CD8-positive, alpha-beta T cell (primary cell): ENCODE measurements at regions of chr17 and their contacts with region 1.

Region 1: GRCh38 chr17:44503147-44504029 is at the start of gene GPATCH8:
- DNase-seq: peak; percentile 84 to 97 (median 92)
- ATAC-seq: peak; percentile 87
- H3K4me3 ChIP-seq: peak within 1 kb of the TSS; percentile 76 to 84
- H3K4me3 Mint-ChIP-seq: peak within 1 kb of the TSS; percentile 90
- H3K27ac ChIP-seq: peak within 1 kb of the TSS; percentile 85 to 86
- H3K27ac Mint-ChIP-seq: peak within 1 kb of the TSS; percentile 97
- H3K4me1 ChIP-seq: peaks cover 38% of the 10 kb centered on the region
- H3K4me1 Mint-ChIP-seq: peaks cover 45% of the 10 kb centered on the region
- H3K27me3 ChIP-seq: no peaks in the 10 kb centered on the region
- H3K27me3 Mint-ChIP-seq: peaks cover 8% of the 10 kb centered on the region
- CTCF ChIP-seq: no peak
- total RNA-seq, gene GPATCH8: 73.8 to 75.2 TPM

Region 2: DNA sequence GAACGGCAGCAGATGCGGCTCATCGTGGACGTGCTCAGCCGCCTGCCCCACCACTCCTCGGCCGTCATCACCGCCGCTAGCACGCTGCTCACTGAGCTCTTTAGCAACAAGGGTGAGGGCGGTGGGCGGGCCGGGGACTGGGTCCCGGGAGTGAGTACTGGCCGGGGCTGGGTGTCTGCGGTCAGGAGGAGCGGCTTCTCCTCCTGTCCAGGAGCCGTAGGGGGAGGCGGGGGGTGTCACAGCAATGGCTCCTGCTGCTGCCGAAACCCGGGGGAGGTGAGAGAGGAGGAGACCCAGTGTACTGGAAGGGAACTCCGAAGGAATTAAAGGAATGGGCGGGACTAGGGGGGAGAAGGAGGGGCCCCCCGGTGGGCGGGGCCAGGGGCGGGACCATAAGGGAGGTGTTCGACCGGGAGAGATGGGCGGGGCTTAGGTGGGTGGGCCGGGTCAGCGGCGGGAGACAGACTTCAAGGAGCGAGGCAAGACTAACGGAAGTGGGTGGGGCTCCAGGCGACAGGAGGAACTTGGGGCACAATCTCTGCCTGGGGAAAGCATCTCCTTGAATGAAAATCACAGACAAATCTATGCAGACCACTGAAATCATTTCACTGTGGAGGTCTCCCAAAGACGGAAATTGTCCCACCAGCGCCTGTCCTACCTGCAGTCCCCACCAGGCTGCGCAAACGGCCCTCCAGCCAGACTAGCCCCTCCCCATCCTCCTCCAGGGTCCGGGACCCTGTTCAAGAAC is 496.6 kb before region 1 on chr17:
- CTCF ChIA-PET with region 1: no interaction called
- POLR2A ChIA-PET with region 1: no interaction called
- intact Hi-C with region 1: loop called in 1 of 2 experiments (anchors 2 kb)
- DNase-seq: peak; percentile 91 to 99 (median 97)
- ATAC-seq: peak; percentile 88
- H3K4me3 ChIP-seq: peak overlapping the region; percentile 50 to 60
- H3K4me3 Mint-ChIP-seq: peak overlapping the region; percentile 88
- H3K27ac ChIP-seq: peak overlapping the region in 1 of 2 experiments; percentile 22
- H3K27ac Mint-ChIP-seq: no peak overlapping the region
- H3K4me1 ChIP-seq: peaks cover 30% of the 10 kb centered on the region
- H3K4me1 Mint-ChIP-seq: peaks cover 21% of the 10 kb centered on the region
- H3K27me3 ChIP-seq: peaks cover 0 to 17% of the 10 kb centered on the region in 2 experiments
- H3K27me3 Mint-ChIP-seq: peaks cover 5% of the 10 kb centered on the region
- CTCF ChIP-seq: no peak

Region 3: DNA sequence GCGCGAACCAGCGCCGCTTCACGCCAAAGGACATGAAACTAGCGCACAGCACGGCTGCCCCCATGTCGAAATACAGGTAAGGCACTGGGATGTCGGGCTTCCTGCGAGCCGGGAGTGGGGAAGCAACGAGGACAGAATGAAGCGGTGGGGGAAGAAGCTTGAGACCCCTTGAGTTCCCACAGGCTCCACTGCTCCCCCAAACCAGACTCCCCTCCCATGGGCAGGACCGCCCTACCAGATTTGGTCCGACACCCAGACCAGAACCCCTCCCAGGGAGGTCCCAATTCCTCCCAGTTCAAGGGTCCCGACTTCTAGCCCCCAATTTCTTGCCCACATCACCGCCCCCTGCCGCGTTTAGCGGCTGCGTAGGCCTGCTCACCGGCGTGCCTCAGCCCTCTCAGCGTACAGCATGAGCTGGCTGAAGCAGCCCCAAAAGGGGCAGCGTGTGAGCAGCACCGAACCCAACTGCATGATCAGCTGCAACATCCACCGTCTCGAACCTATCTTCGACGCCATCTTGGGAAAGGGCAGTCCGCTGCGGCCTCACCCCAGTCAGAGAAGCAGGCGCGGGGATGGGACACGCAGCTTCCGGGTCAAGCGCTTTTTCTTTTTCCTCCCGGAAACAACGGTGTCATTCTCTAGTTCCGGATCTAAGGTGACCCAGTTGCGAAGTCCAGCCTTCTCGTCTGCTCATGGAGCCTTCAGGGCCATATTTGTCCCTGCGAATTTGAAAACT is 488.8 kb before region 1 on chr17 and contains the start of gene TMEM101:
- CTCF ChIA-PET with region 1: no interaction called
- POLR2A ChIA-PET with region 1: no interaction called
- intact Hi-C with region 1: loop called in 1 of 2 experiments (anchors 2 kb)
- DNase-seq: peak; percentile 79 to 95 (median 90)
- ATAC-seq: peak; percentile 99
- H3K4me3 ChIP-seq: peak within 1 kb of the TSS; percentile 81 to 91
- H3K4me3 Mint-ChIP-seq: peak within 1 kb of the TSS; percentile 100
- H3K27ac ChIP-seq: peak within 1 kb of the TSS; percentile 51 to 55
- H3K27ac Mint-ChIP-seq: peak within 1 kb of the TSS; percentile 95
- H3K4me1 ChIP-seq: peaks cover 11% of the 10 kb centered on the region
- H3K4me1 Mint-ChIP-seq: peaks cover 10% of the 10 kb centered on the region
- H3K27me3 ChIP-seq: no peaks in the 10 kb centered on the region
- H3K27me3 Mint-ChIP-seq: no peaks in the 10 kb centered on the region
- CTCF ChIP-seq: no peak
- total RNA-seq, gene TMEM101: 8.1 to 8.7 TPM

Region 4: GRCh38 chr17:44293509-44294226 is 209.7 kb before region 1 on chr17:
- CTCF ChIA-PET with region 1: no interaction called
- POLR2A ChIA-PET with region 1: no interaction called
- intact Hi-C with region 1: no loop called
- DNase-seq: no peak
- ATAC-seq: no peak
- H3K4me3 ChIP-seq: no peak overlapping the region
- H3K4me3 Mint-ChIP-seq: no peak overlapping the region
- H3K27ac ChIP-seq: no peak overlapping the region
- H3K27ac Mint-ChIP-seq: no peak overlapping the region
- H3K4me1 ChIP-seq: no peaks in the 10 kb centered on the region
- H3K4me1 Mint-ChIP-seq: no peaks in the 10 kb centered on the region
- H3K27me3 ChIP-seq: no peaks in the 10 kb centered on the region
- H3K27me3 Mint-ChIP-seq: peaks cover 2% of the 10 kb centered on the region
- CTCF ChIP-seq: no peak

Region 5: GRCh38 chr17:44363613-44364159 is 139.7 kb before region 1 on chr17 and contains the start of gene FAM171A2:
- CTCF ChIA-PET with region 1: no interaction called
- POLR2A ChIA-PET with region 1: no interaction called
- intact Hi-C with region 1: loop called in 1 of 2 experiments (anchors 2 kb)
- DNase-seq: peak; percentile 44 to 86 (median 61)
- ATAC-seq: peak; percentile 92
- H3K4me3 ChIP-seq: peak within 1 kb of the TSS; percentile 51 to 59
- H3K4me3 Mint-ChIP-seq: peak within 1 kb of the TSS; percentile 80
- H3K27ac ChIP-seq: no peak within 1 kb of the TSS
- H3K27ac Mint-ChIP-seq: no peak within 1 kb of the TSS
- H3K4me1 ChIP-seq: peaks cover 3% of the 10 kb centered on the region
- H3K4me1 Mint-ChIP-seq: peaks cover 8% of the 10 kb centered on the region
- H3K27me3 ChIP-seq: peaks cover 0 to 12% of the 10 kb centered on the region in 2 experiments
- H3K27me3 Mint-ChIP-seq: peaks cover 19% of the 10 kb centered on the region
- CTCF ChIP-seq: peak; percentile 89
- total RNA-seq, gene FAM171A2: 0.24 to 0.44 TPM

Region 6: DNA sequence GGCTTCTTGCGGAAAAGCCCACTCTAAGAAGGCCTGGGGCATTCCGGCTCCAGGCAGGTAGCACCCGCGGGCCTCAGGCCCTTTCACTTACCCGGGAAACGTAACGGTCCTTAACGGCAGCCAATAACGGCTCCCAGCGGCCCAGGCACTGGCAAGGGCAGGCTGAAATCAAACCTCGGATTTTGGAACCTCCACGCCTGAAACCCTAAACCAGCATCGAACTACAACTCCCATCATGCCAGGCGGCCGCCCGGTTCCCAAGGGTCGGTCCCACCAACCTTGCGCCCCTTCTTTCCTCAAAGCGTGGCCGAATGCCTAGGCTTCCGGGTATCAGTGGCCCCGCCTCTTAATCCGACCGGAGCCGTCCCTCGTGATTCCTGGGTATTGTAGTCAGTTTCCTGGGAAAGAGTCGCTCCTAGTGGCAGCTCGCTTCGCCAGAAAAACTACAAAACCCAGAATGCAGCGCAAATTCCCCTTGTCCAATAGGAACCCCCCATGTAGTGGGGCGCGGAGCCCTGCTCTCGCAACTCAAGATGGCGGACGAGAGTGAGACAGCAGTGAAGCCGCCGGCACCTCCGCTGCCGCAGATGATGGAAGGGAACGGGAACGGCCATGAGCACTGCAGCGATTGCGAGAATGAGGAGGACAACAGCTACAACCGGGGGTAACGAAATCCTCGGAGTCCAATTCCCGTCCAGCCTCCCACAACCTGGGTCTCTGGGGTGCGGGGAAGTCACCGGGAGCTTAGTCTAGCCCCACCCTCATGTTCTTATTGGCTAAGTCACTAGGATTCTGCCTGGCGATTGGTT is 557.6 kb after region 1 on chr17 and contains the start of gene NMT1:
- CTCF ChIA-PET with region 1: no interaction called
- POLR2A ChIA-PET with region 1: no interaction called
- intact Hi-C with region 1: loop called in 1 of 2 experiments (anchors 10 kb)
- DNase-seq: peak; percentile 88 to 99 (median 94)
- ATAC-seq: peak; percentile 90
- H3K4me3 ChIP-seq: peak within 1 kb of the TSS; percentile 84 to 88
- H3K4me3 Mint-ChIP-seq: peak within 1 kb of the TSS; percentile 97
- H3K27ac ChIP-seq: peak within 1 kb of the TSS; percentile 81 to 91
- H3K27ac Mint-ChIP-seq: peak within 1 kb of the TSS; percentile 99
- H3K4me1 ChIP-seq: peaks cover 32% of the 10 kb centered on the region
- H3K4me1 Mint-ChIP-seq: peaks cover 43% of the 10 kb centered on the region
- H3K27me3 ChIP-seq: no peaks in the 10 kb centered on the region
- H3K27me3 Mint-ChIP-seq: no peaks in the 10 kb centered on the region
- CTCF ChIP-seq: no peak
- total RNA-seq, gene NMT1: 62.6 to 66.6 TPM